ENCODE measurements at regions of chr17 and their contacts with region 1.

Region 1: GRCh38 chr17:42116705-42117396 is 4.3 kb downstream of the KAT2A start:
- DNase-seq: peak; percentile 89
- H3K4me3 ChIP-seq: no peak overlapping the region
- H3K27ac ChIP-seq: no peak overlapping the region
- H3K4me1 ChIP-seq: peaks cover 13% of the 10 kb centered on the region
- H3K27me3 ChIP-seq: no peaks in the 10 kb centered on the region
- CTCF ChIP-seq: peak; percentile 86

Region 2: GRCh38 chr17:41965694-41966462 is 151.0 kb before region 1 on chr17:
- intact Hi-C with region 1: loop called (anchors 2 kb)
- DNase-seq: peak; percentile 93
- H3K4me3 ChIP-seq: peak overlapping the region; percentile 69
- H3K27ac ChIP-seq: peak overlapping the region; percentile 82
- H3K4me1 ChIP-seq: peaks cover 4% of the 10 kb centered on the region
- H3K27me3 ChIP-seq: no peaks in the 10 kb centered on the region
- CTCF ChIP-seq: no peak

Region 3: GRCh38 chr17:42027961-42028790 is 88.7 kb before region 1 on chr17:
- intact Hi-C with region 1: loop called (anchors 5 kb)
- DNase-seq: no peak
- H3K4me3 ChIP-seq: no peak overlapping the region
- H3K27ac ChIP-seq: no peak overlapping the region
- H3K4me1 ChIP-seq: peaks cover 13% of the 10 kb centered on the region
- H3K27me3 ChIP-seq: no peaks in the 10 kb centered on the region
- CTCF ChIP-seq: no peak

Region 4: GRCh38 chr17:42067351-42068091 is 49.3 kb before region 1 on chr17:
- intact Hi-C with region 1: loop called (anchors 5 kb)
- DNase-seq: peak; percentile 81
- H3K4me3 ChIP-seq: no peak overlapping the region
- H3K27ac ChIP-seq: no peak overlapping the region
- H3K4me1 ChIP-seq: no peaks in the 10 kb centered on the region
- H3K27me3 ChIP-seq: peaks cover 16% of the 10 kb centered on the region
- CTCF ChIP-seq: peak; percentile 91

Region 5: GRCh38 chr17:42178817-42179216 is 62.0 kb after region 1 on chr17:
- intact Hi-C with region 1: no loop called
- DNase-seq: no peak
- H3K4me3 ChIP-seq: no peak overlapping the region
- H3K27ac ChIP-seq: no peak overlapping the region
- H3K4me1 ChIP-seq: peaks cover 17% of the 10 kb centered on the region
- H3K27me3 ChIP-seq: peaks cover 16% of the 10 kb centered on the region
- CTCF ChIP-seq: no peak